ENCODE measurements at regions of chr21 and their contacts with region 1.

Region 1: DNA sequence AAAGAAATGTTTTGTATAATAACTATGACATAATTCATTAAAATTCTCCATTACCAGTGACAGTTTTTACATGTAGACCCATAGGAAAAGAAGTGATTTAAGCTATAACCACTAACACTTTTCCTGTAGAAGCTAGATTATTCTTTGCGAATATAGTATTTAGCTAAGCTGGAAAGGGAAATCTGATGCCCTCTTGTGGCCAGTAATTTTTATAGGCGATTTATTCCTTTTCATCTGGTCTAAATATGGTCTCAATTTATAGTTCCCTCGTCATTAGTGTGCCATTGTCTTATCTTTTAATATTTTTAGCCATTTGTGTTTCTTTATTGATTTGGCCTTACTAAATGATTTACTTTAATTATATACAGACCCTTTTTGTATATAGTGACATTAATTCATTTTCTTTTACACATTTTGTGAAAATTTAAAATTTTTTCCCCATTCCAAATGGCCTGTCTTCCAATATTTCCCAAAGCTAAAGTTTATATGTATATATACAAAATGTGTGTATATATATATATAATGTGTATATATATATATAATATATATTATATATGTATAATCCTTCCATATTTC is 26.7 kb downstream of the BTG3 start:
- DNase-seq: peak; percentile 42
- ATAC-seq: peak; percentile 63; the same call in 1 of the 2 replicates
- H3K4me3 ChIP-seq: no peak overlapping the region
- H3K27ac ChIP-seq: no peak overlapping the region
- H3K4me1 ChIP-seq: no peaks in the 10 kb centered on the region
- H3K27me3 ChIP-seq: no peaks in the 10 kb centered on the region
- CTCF ChIP-seq: peak; percentile 22 to 66 (median 39); a peak in 5 of 6 replicates
- POLR2A ChIP-seq: no peak
- RAD21 ChIP-seq: peak; percentile 44; the same call in 1 of the 2 replicates

Region 2: DNA sequence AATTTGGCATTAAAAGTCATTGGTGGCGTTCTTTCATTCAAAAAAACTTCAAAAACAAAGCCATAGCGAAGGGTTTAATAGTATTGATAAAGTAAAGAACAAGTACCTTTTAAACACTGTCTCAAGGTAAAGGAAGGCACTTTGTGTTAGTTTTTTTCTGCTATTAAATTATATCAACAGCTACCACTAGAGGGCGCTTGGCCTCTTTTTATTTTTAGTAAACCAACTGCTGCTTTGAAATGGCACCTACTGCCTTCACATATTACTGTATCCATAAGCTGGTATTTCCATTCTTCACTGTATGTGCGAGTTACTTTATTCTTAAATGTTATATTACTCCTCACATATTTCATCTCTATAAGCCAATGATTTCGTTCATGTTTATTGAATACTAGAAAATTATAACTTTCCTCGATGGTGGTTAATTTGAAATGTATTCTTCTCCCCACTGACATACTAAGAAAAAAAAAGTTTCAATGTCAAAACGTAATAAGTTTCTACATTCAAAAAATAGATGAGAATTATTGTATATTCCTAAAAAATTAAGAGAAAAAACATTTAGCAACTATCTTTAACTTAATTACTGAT is 198.8 kb before region 1 on chr21:
- CTCF ChIA-PET with region 1: interaction called, 143 read pairs
- POLR2A ChIA-PET with region 1: no interaction called
- RAD21 ChIA-PET with region 1: interaction called, 13 to 22 read pairs
- intact Hi-C with region 1: loop called (anchors 1 kb)
- DNase-seq: peak; percentile 51
- ATAC-seq: peak; percentile 76
- H3K4me3 ChIP-seq: no peak overlapping the region
- H3K27ac ChIP-seq: no peak overlapping the region
- H3K4me1 ChIP-seq: no peaks in the 10 kb centered on the region
- H3K27me3 ChIP-seq: no peaks in the 10 kb centered on the region
- CTCF ChIP-seq: peak; percentile 40 to 79 (median 48); a peak in 5 of 6 replicates
- POLR2A ChIP-seq: no peak
- RAD21 ChIP-seq: peak; percentile 64

Region 3: DNA sequence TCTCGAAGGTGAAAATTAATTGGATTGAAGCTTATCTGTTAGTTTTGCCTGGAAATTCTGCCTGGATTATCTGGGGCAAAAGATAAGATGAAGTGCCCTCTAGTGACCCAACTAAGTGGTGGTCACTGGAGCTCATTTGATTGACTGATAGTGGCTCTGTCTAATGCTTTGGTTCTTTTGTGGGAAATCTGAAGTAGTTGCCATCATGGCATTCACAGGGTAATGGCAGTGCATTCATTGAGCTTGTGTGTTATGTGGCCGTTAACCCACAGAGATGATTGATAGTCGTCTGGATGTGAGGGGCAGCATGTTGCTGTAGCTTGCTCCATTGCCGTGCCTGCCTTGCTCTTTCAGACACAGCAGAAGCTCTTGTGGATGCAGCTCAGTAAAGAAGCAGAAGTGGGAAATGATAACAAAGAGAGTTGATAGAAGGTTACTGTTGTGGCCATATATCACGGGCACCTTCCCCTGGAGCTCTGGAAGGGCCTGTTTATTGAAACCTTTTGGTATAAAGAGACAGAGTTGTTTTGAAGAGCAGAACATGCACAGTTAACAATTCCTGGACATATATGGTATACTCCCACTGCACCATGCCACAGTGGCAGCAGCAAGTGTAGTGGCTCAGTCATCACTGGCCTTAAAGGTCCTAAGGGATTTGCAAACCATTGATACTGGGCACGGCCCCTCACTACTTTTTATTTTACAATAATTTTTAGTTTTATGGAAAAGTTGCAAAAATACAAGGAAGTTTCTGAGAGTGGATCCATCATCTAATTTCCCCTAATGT is 31.1 kb before region 1 on chr21:
- CTCF ChIA-PET with region 1: interaction called, 13 read pairs
- POLR2A ChIA-PET with region 1: no interaction called
- RAD21 ChIA-PET with region 1: no interaction called
- intact Hi-C with region 1: no loop called
- DNase-seq: no peak
- ATAC-seq: peak; percentile 70
- H3K4me3 ChIP-seq: no peak overlapping the region
- H3K27ac ChIP-seq: no peak overlapping the region
- H3K4me1 ChIP-seq: peaks cover 4 to 12% of the 10 kb centered on the region in 2 experiments; a peak in 2 of 4 replicates
- H3K27me3 ChIP-seq: no peaks in the 10 kb centered on the region
- CTCF ChIP-seq: peak; percentile 22 to 54 (median 49); a peak in 5 of 6 replicates
- POLR2A ChIP-seq: no peak
- RAD21 ChIP-seq: peak; percentile 44